ENCODE measurements at regions of chr20 and their contacts with region 1.

Region 1: GRCh38 chr20:37990571-37991151 is 42.6 kb downstream of the TTI1 start:
- DNase-seq: peak; percentile 76
- H3K4me3 Mint-ChIP-seq: peak overlapping the region; percentile 10
- H3K27ac Mint-ChIP-seq: peak overlapping the region; percentile 55
- H3K4me1 Mint-ChIP-seq: peaks cover 44% of the 10 kb centered on the region
- H3K27me3 Mint-ChIP-seq: no peaks in the 10 kb centered on the region
- CTCF ChIP-seq: no peak

Region 2: DNA sequence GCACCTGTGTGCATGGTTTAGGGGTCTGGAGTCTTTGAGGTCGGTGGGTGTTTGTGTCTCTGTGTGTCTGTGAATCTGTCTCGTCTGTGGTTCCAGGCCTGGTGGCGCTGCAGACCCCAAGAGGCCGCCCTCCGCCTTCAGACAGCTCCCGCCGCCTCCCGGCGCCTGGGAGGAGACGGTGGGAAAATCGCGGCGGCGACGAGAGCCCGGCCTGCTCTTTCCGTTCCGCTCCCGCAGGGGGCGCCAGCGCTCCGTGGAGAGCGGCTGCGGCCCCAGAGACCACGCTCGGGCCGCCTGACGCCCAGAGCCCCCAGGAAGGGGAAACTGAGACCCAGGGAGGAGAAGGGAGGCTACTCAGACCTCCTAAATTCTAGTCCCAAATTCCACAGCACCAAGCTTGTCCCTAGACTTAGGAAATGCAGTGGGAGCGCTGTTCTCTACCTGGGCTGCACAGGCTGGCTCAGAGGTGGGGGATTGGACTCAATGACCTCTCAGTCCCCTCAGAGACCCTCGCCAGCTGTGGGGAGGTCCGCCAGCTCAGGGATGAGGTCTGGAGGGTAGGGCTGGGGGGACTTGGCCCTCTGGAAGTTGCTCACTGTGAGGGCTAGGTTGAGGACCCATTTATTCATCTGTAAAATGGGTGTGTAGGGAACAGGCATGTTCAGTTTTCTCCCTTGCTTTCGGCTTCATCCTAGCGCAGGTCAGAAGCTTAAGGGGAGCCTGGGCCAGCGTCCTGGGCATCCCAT is 426.1 kb before region 1 on chr20:
- CTCF ChIA-PET with region 1: interaction called, 11 read pairs
- intact Hi-C with region 1: loop called (anchors 5 kb)
- DNase-seq: peak; percentile 84
- H3K4me3 Mint-ChIP-seq: peak overlapping the region; percentile 14
- H3K27ac Mint-ChIP-seq: no peak overlapping the region
- H3K4me1 Mint-ChIP-seq: peaks cover 7% of the 10 kb centered on the region
- H3K27me3 Mint-ChIP-seq: peaks cover 100% of the 10 kb centered on the region
- CTCF ChIP-seq: peak; percentile 98

Region 3: DNA sequence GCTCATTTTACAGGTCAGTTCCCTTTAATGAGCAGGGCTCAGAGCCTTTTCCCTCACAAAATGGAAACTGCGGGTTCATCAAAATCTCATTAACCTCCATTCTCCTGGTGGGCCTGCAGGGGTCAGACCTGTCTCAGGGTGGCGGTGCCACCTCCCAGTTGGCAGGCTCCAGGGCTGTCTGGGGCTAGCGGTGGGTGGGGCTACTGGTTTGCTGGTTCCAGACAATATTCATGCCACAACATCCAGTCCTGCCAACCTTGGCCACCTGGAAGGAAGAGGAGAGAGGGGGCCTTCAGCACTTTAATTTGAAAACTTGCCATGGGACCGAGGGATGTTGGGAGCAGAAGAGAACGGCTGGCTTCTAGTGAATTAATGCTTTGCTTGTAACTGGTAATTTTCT is 338.7 kb before region 1 on chr20:
- CTCF ChIA-PET with region 1: interaction called, 5 read pairs
- intact Hi-C with region 1: loop called (anchors 2 kb)
- DNase-seq: peak; percentile 77
- H3K4me3 Mint-ChIP-seq: no peak overlapping the region
- H3K27ac Mint-ChIP-seq: no peak overlapping the region
- H3K4me1 Mint-ChIP-seq: peaks cover 9% of the 10 kb centered on the region
- H3K27me3 Mint-ChIP-seq: peaks cover 95% of the 10 kb centered on the region
- CTCF ChIP-seq: peak; percentile 44

Region 4: GRCh38 chr20:37901654-37902503 is 88.8 kb before region 1 on chr20:
- CTCF ChIA-PET with region 1: interaction called, 3 read pairs
- intact Hi-C with region 1: loop called (anchors 1 kb)
- DNase-seq: peak; percentile 62
- H3K4me3 Mint-ChIP-seq: peak overlapping the region; percentile 52
- H3K27ac Mint-ChIP-seq: no peak overlapping the region
- H3K4me1 Mint-ChIP-seq: peaks cover 7% of the 10 kb centered on the region
- H3K27me3 Mint-ChIP-seq: peaks cover 93% of the 10 kb centered on the region
- CTCF ChIP-seq: peak; percentile 46

Region 5: GRCh38 chr20:38032585-38033309 is 42.1 kb after region 1 on chr20:
- CTCF ChIA-PET with region 1: no interaction called
- intact Hi-C with region 1: no loop called
- DNase-seq: no peak
- H3K4me3 Mint-ChIP-seq: peak overlapping the region; percentile 78
- H3K27ac Mint-ChIP-seq: peak overlapping the region; percentile 72
- H3K4me1 Mint-ChIP-seq: peaks cover 67% of the 10 kb centered on the region
- H3K27me3 Mint-ChIP-seq: no peaks in the 10 kb centered on the region
- CTCF ChIP-seq: no peak